Upper lobe of right lung (tissue), 1 donor: ENCODE measurements at regions of chr1 and their contacts with region 1.

Region 1: GRCh38 chr1:221203224-221204054 is 324.2 kb downstream of the HLX start:
- DNase-seq: peak; percentile 73
- ATAC-seq: peak; percentile 91
- H3K4me3 ChIP-seq: no peak overlapping the region
- H3K27ac ChIP-seq: no peak overlapping the region
- H3K4me1 ChIP-seq: no peaks in the 10 kb centered on the region
- H3K27me3 ChIP-seq: no peaks in the 10 kb centered on the region
- CTCF ChIP-seq: peak; percentile 93

Region 2: GRCh38 chr1:220879509-220880361 is 323.7 kb before region 1 on chr1:
- intact Hi-C with region 1: loop called (anchors 10 kb)
- DNase-seq: peak; percentile 81
- ATAC-seq: peak; percentile 68
- H3K4me3 ChIP-seq: peak overlapping the region; percentile 70
- H3K27ac ChIP-seq: peak overlapping the region; percentile 96
- H3K4me1 ChIP-seq: peaks cover 21% of the 10 kb centered on the region
- H3K27me3 ChIP-seq: no peaks in the 10 kb centered on the region
- CTCF ChIP-seq: no peak

Region 3: GRCh38 chr1:220983877-220984635 is 219.4 kb before region 1 on chr1:
- intact Hi-C with region 1: no loop called
- DNase-seq: no peak
- ATAC-seq: no peak
- H3K4me3 ChIP-seq: no peak overlapping the region
- H3K27ac ChIP-seq: no peak overlapping the region
- H3K4me1 ChIP-seq: no peaks in the 10 kb centered on the region
- H3K27me3 ChIP-seq: no peaks in the 10 kb centered on the region
- CTCF ChIP-seq: no peak

Region 4: GRCh38 chr1:221573756-221574155 is 370.3 kb after region 1 on chr1:
- intact Hi-C with region 1: no loop called
- DNase-seq: no peak
- ATAC-seq: peak; percentile 16
- H3K4me3 ChIP-seq: no peak overlapping the region
- H3K27ac ChIP-seq: no peak overlapping the region
- H3K4me1 ChIP-seq: no peaks in the 10 kb centered on the region
- H3K27me3 ChIP-seq: no peaks in the 10 kb centered on the region
- CTCF ChIP-seq: no peak